ENCODE measurements at regions of chr3 and their contacts with region 1.

Region 1: DNA sequence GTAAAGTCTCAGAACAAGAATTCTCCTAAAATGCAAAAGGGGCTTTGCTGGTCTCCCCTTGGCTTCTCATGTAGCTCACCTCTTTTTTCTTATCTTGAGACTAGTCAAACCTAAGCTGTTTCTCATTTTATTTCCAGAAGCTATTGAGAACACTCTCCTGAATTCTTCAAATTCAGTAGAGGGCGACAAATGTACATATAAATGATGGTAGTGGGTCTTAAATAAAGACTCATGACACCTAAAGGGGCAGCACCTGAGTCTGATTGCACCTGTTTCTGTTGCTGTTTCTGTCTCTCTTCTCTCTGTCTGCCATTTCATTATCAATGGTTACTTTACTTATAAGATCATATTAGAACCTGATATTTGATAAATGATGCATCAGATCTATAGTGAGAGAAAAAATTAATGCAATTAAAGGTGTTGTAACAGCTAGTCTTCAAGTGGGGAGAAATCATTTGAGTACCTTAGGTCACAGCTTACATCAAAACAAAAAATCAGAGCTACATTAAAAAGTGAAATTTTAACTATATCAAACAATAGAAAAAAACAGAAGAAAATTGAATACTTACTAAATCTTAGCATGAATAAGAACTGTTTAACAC is 7.0 kb downstream of the ADIPOQ start:
- DNase-seq: no peak
- H3K4me3 Mint-ChIP-seq: no peak overlapping the region
- H3K27ac Mint-ChIP-seq: no peak overlapping the region
- H3K4me1 Mint-ChIP-seq: peaks cover 16% of the 10 kb centered on the region
- H3K27me3 Mint-ChIP-seq: peaks cover 6% of the 10 kb centered on the region

Region 2: DNA sequence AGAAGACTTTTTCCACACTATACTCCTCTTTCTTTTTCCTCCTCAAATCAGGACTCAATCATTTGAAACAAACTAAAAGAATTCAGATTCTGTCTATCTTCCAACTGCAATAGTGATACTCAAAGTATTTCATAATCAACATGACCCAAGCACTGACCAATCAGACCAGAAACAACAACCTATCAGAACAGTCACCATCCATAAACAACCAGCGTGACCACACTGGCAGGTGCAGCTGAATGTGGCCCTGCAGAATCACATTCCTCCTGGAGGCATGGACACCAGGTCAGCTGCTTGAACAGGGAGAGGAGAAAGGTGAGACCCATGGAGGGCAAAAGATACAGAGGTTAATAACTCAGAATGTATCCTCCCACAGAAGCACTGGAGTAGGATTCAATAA is 170.3 kb before region 1 on chr3:
- CTCF ChIA-PET with region 1: no interaction called
- POLR2A ChIA-PET with region 1: no interaction called
- DNase-seq: no peak
- H3K4me3 Mint-ChIP-seq: no peak overlapping the region
- H3K27ac Mint-ChIP-seq: no peak overlapping the region
- H3K4me1 Mint-ChIP-seq: no peaks in the 10 kb centered on the region
- H3K27me3 Mint-ChIP-seq: peaks cover 50% of the 10 kb centered on the region

Region 3: DNA sequence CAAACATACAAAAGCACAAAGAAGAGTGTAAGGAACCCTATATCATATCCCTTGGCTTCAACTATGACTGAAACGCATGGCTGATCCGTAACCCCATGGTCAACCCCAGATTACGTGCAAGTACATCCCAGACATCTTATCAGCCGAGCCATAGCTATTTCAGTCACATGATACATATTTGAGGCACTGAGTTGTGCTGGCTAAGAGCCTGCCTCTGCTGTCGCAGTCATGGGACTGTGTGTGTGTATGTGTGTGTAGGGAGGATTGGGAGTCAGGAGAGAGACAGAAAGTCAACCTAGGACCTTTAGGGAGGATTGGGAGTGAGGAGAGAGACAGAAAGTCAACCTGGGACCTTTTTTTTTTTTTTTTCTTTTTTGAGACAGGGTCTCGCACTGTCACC is 89.2 kb after region 1 on chr3:
- CTCF ChIA-PET with region 1: interaction called, 55 read pairs
- POLR2A ChIA-PET with region 1: interaction called, 50 read pairs
- DNase-seq: no peak
- H3K4me3 Mint-ChIP-seq: no peak overlapping the region
- H3K27ac Mint-ChIP-seq: peak overlapping the region; percentile 24
- H3K4me1 Mint-ChIP-seq: peaks cover 36% of the 10 kb centered on the region
- H3K27me3 Mint-ChIP-seq: no peaks in the 10 kb centered on the region

Region 4: GRCh38 chr3:187000711-187001151 is 151.3 kb after region 1 on chr3:
- CTCF ChIA-PET with region 1: interaction called, 10 read pairs
- POLR2A ChIA-PET with region 1: no interaction called
- DNase-seq: peak; percentile 33
- H3K4me3 Mint-ChIP-seq: peak overlapping the region; percentile 45
- H3K27ac Mint-ChIP-seq: peak overlapping the region; percentile 86
- H3K4me1 Mint-ChIP-seq: peaks cover 65% of the 10 kb centered on the region
- H3K27me3 Mint-ChIP-seq: no peaks in the 10 kb centered on the region

Region 5: DNA sequence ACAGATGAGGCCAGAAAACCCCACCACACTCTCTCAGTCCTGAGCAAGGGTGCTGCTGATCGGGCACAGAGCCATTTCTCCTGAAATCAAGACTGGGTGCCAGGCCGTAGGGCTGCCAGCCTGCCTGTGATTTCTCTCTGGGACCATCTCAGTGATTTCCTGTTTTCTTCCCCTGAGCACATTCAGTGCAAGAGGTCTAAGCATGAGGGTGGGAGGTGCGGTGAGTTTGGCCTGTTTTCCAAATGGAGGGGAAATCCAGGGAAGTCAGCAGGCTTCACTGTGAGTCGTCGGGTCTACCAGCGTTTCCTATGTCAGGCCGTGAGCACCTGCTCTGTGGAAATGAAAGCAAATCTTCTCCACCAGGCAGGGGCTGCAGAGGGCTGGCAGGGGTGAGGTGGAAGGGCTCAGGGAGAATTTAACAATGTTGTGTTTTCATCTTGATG is 163.2 kb after region 1 on chr3:
- CTCF ChIA-PET with region 1: no interaction called
- POLR2A ChIA-PET with region 1: no interaction called
- DNase-seq: peak; percentile 39
- H3K4me3 Mint-ChIP-seq: no peak overlapping the region
- H3K27ac Mint-ChIP-seq: peak overlapping the region; percentile 73
- H3K4me1 Mint-ChIP-seq: peaks cover 50% of the 10 kb centered on the region
- H3K27me3 Mint-ChIP-seq: no peaks in the 10 kb centered on the region

Region 6: GRCh38 chr3:187101184-187102072 is 252.0 kb after region 1 on chr3:
- CTCF ChIA-PET with region 1: interaction called, 13 read pairs
- POLR2A ChIA-PET with region 1: interaction called, 3 read pairs
- DNase-seq: peak; percentile 64
- H3K4me3 Mint-ChIP-seq: peak overlapping the region; percentile 56
- H3K27ac Mint-ChIP-seq: peak overlapping the region; percentile 44
- H3K4me1 Mint-ChIP-seq: peaks cover 56% of the 10 kb centered on the region
- H3K27me3 Mint-ChIP-seq: peaks cover 6% of the 10 kb centered on the region

Region 7: DNA sequence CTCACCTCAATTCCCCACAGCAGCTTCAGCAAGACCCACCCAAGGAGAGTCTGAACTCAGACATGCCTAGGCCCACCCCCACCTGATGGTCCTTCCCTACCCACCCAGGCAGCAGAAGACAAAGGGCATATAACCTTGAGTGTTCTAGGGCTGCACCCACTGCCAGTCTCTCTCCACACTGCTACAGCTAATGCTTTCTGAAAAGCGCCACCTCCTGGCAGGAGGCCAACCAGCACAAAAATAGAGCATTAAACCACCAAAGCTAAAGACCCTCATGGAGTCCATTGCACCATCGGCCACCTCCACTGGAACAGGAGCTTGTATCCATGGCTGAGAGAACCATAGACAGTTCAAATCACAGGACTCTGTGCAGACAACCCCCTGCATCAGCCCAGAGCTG is 301.1 kb after region 1 on chr3:
- CTCF ChIA-PET with region 1: interaction called, 24 read pairs
- POLR2A ChIA-PET with region 1: no interaction called
- DNase-seq: peak; percentile 71
- H3K4me3 Mint-ChIP-seq: no peak overlapping the region
- H3K27ac Mint-ChIP-seq: no peak overlapping the region
- H3K4me1 Mint-ChIP-seq: peaks cover 2% of the 10 kb centered on the region
- H3K27me3 Mint-ChIP-seq: peaks cover 49% of the 10 kb centered on the region